OCI-LY7 (cell line): ENCODE measurements at regions of chr5 and their contacts with region 1.

Region 1: GRCh38 chr5:156920042-156920860 is 42.8 kb downstream of the TIMD4 start:
- DNase-seq: no peak
- H3K4me3 ChIP-seq: peak overlapping the region; percentile 7
- H3K27ac ChIP-seq: peak overlapping the region; percentile 83
- H3K4me1 ChIP-seq: peaks cover 96% of the 10 kb centered on the region
- CTCF ChIP-seq: no peak

Region 2: DNA sequence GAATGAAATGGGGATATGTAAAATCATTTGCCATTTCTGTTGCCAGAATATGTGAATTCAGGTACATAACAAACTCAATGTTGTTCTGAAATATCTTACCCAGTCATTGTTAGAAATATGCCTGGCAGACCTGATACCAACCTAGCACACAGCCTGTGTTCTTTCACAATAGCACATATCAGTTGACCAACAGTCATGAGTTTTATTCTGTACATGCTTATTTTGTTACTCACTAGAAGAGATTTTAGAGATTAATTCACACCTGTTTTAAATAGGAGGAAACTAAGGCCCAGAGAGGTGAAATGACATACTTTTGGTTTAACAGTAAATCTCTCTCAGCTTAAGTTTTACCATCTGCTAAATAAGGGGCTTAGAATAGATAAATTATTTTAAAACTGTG is 78.5 kb before region 1 on chr5:
- CTCF ChIA-PET with region 1: no interaction called
- POLR2A ChIA-PET with region 1: interaction called, 10 read pairs
- intact Hi-C with region 1: no loop called
- DNase-seq: no peak
- H3K4me3 ChIP-seq: no peak overlapping the region
- H3K27ac ChIP-seq: no peak overlapping the region
- H3K4me1 ChIP-seq: peaks cover 5% of the 10 kb centered on the region
- CTCF ChIP-seq: no peak